GM12878 (cell line): ENCODE measurements at regions of chr3 and their contacts with region 1.

Region 1: DNA sequence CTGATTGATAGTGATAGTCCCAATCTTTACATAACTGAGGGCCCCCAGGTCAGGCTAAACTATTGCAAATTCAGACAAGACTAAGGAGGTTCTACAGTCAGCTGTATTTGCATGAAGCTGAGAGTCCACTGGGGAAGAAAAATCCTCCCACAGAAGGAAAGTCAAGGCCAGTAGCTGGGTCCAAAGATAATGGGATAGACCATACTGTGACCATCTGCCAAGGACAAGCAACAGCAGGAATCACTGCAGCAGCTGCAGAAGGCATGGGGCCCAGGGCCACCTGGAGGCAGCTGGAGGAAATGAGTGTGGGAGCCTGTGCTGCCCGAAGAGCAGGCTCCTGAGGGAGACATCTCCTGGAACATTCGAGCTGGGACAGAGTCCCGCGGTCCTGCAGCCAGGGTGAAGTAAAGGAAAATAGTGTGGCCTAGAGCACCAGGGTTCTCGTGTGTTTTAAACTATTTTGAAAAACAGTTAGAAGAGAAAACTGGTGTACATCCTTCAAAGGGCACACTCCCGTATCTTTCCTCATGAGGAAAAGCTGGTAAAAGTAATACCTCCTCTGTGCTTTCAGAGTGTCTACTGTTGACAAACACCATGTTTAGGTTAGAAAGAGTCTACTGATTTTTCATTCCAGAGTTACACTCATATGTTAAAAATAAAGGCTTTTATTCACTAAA is 13.2 kb upstream of the TMEM212 start:
- DNase-seq: no peak
- ATAC-seq: peak; percentile 85
- H3K4me3 ChIP-seq: no peak overlapping the region
- H3K27ac ChIP-seq: no peak overlapping the region
- H3K4me1 ChIP-seq: no peaks in the 10 kb centered on the region
- H3K27me3 ChIP-seq: no peaks in the 10 kb centered on the region; a peak in 1 of 4 replicates
- CTCF ChIP-seq: peak; percentile 52 to 80 (median 74)
- EP300 ChIP-seq: no peak
- POLR2A ChIP-seq: no peak
- RAD21 ChIP-seq: peak; percentile 53

Region 2: GRCh38 chr3:170961616-170962400 is 868.2 kb before region 1 on chr3:
- CTCF ChIA-PET with region 1: interaction called, 10 read pairs
- POLR2A ChIA-PET with region 1: no interaction called
- RAD21 ChIA-PET with region 1: interaction called, 8 read pairs
- SMC1A ChIA-PET with region 1: interaction called, 7 read pairs
- in situ Hi-C with region 1: no loop called
- intact Hi-C with region 1: no loop called
- DNase-seq: no peak
- ATAC-seq: 0 out of 3 replicates have a peak, but pooled peaks have one; percentile 30
- H3K4me3 ChIP-seq: no peak overlapping the region
- H3K27ac ChIP-seq: no peak overlapping the region
- H3K4me1 ChIP-seq: no peaks in the 10 kb centered on the region
- H3K27me3 ChIP-seq: no peaks in the 10 kb centered on the region; a peak in 1 of 4 replicates
- CTCF ChIP-seq: peak; percentile 31 to 64 (median 43); a peak in 5 of 6 replicates
- EP300 ChIP-seq: no peak
- POLR2A ChIP-seq: no peak
- RAD21 ChIP-seq: peak; percentile 73

Region 3: DNA sequence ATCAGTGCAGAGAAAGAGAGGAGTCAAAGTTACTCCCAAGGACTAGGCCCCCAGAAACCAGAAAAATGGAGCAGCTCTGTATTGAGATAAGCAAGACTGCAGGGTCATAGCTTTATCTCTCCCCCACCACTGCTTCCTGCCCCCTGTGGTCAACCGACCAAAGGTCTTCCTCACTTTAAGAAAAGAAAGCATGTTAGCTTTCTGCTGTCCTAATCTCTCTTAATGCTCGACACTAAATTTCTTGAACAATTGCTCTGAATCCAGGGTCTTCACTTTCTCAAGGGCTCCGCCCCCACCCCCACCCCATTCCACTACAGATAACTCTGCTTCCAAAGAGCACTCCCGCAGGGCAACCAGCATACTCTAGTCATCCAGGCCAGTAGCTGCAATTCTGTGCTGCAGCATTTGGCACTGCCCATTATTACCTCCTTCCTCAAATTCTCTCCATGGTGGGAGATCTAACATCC is 401.6 kb before region 1 on chr3:
- CTCF ChIA-PET with region 1: no interaction called
- POLR2A ChIA-PET with region 1: no interaction called
- RAD21 ChIA-PET with region 1: no interaction called
- SMC1A ChIA-PET with region 1: no interaction called
- in situ Hi-C with region 1: no loop called
- intact Hi-C with region 1: no loop called
- DNase-seq: no peak
- ATAC-seq: peak; percentile 85
- H3K4me3 ChIP-seq: no peak overlapping the region
- H3K27ac ChIP-seq: peak overlapping the region; percentile 32; the same call in 1 of the 2 replicates
- H3K4me1 ChIP-seq: peaks cover 8% of the 10 kb centered on the region; the same call in 1 of the 2 replicates
- H3K27me3 ChIP-seq: no peaks in the 10 kb centered on the region
- CTCF ChIP-seq: 0 out of 6 replicates have a peak, but pooled peaks of 1 of the 3 experiments have one; percentile 11
- EP300 ChIP-seq: no peak
- POLR2A ChIP-seq: no peak
- RAD21 ChIP-seq: no peak

Region 4: DNA sequence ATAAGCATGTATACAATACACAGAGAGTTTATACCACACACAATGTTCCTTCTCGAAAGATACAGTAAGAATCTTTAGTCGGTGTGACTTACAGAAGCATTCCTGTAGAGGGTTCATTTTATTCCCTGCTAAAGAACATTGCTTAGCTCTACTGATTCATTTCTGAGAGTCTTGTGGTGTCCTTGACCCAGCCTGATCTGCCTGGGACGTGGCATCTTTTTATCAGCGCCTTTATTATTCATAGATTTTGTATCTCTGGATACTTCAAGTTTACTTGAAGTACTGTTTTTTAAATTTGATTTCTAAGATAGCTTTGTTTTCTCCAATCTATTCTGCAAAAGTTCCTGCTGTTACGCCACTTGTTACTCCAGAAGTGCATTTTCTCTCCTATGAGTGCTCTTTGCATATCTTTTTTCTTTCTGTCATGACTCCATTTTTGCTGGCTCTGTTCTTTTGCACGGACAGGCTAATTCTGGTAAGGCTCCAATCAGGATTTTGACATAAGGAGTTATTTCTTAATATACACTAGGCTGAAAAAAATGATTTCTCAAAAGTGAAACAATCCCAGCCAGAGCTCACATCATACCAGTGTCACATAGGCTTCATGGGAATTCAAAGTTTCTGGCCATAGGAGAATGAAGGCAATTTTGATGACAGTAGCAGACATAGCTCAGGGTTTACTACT is 255.3 kb before region 1 on chr3:
- CTCF ChIA-PET with region 1: interaction called, 13 read pairs
- POLR2A ChIA-PET with region 1: no interaction called
- RAD21 ChIA-PET with region 1: interaction called, 10 read pairs
- SMC1A ChIA-PET with region 1: interaction called, 15 read pairs
- in situ Hi-C with region 1: no loop called
- intact Hi-C with region 1: loop called (anchors 5 kb)
- DNase-seq: no peak
- ATAC-seq: peak; percentile 17; the same call in 1 of the 3 replicates
- H3K4me3 ChIP-seq: no peak overlapping the region
- H3K27ac ChIP-seq: no peak overlapping the region
- H3K4me1 ChIP-seq: no peaks in the 10 kb centered on the region
- H3K27me3 ChIP-seq: no peaks in the 10 kb centered on the region
- CTCF ChIP-seq: no peak
- EP300 ChIP-seq: no peak
- POLR2A ChIP-seq: no peak
- RAD21 ChIP-seq: no peak

Region 5: GRCh38 chr3:171654809-171655208 is 175.2 kb before region 1 on chr3:
- CTCF ChIA-PET with region 1: interaction called, 19 read pairs
- POLR2A ChIA-PET with region 1: no interaction called
- RAD21 ChIA-PET with region 1: interaction called, 6 read pairs
- SMC1A ChIA-PET with region 1: interaction called, 9 read pairs
- in situ Hi-C with region 1: no loop called
- intact Hi-C with region 1: no loop called
- DNase-seq: no peak
- ATAC-seq: peak; percentile 31
- H3K4me3 ChIP-seq: no peak overlapping the region
- H3K27ac ChIP-seq: peak overlapping the region; percentile 32; the same call in 1 of the 2 replicates
- H3K4me1 ChIP-seq: peaks cover 7% of the 10 kb centered on the region
- H3K27me3 ChIP-seq: no peaks in the 10 kb centered on the region
- CTCF ChIP-seq: no peak
- EP300 ChIP-seq: no peak
- POLR2A ChIP-seq: no peak
- RAD21 ChIP-seq: no peak

Region 6: DNA sequence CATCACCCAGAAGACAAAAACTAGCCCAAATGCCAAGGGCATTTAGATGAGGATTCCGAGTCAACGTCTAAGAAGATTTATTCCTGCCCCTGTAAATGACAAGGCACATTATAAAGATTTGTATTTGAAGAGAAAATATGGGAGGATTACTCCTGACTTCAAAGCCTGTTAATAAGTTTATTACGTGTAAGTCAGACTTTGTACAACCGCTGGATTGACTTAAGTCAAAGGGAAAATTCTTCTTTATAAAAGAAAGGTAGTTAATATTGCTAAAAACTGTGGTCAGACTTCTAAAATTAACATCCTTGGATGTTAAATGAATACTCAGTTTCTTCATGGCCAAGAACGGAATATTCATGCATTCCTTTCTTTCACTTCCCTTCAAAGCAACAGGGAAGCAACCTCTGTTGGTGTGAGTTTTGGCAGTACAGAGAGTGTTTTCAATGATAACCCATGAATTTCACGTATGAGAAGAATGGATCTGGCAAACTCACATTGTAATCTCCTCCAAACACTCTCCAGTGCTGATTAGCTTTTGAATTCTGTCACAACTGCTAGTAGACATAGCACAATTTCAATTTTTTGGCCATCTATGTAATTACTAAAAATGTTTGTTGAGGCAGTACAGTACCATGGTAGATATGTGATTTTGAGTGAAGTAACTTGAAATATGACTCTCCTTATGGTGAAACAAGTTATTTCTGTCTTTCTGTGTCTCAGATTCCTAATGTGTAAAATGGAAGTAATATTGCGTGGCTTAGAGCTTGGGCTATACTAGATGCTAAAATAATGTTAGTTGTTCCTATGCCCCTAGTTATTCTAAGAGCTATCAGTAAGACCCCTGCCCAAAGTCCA is 81.7 kb before region 1 on chr3:
- CTCF ChIA-PET with region 1: interaction called, 6 read pairs
- POLR2A ChIA-PET with region 1: no interaction called
- RAD21 ChIA-PET with region 1: interaction called, 5 read pairs
- SMC1A ChIA-PET with region 1: interaction called, 10 read pairs
- in situ Hi-C with region 1: no loop called
- intact Hi-C with region 1: no loop called
- DNase-seq: no peak
- ATAC-seq: no peak
- H3K4me3 ChIP-seq: no peak overlapping the region
- H3K27ac ChIP-seq: no peak overlapping the region
- H3K4me1 ChIP-seq: no peaks in the 10 kb centered on the region
- H3K27me3 ChIP-seq: no peaks in the 10 kb centered on the region; a peak in 1 of 4 replicates
- CTCF ChIP-seq: no peak
- EP300 ChIP-seq: no peak
- POLR2A ChIP-seq: no peak
- RAD21 ChIP-seq: no peak

Region 7: DNA sequence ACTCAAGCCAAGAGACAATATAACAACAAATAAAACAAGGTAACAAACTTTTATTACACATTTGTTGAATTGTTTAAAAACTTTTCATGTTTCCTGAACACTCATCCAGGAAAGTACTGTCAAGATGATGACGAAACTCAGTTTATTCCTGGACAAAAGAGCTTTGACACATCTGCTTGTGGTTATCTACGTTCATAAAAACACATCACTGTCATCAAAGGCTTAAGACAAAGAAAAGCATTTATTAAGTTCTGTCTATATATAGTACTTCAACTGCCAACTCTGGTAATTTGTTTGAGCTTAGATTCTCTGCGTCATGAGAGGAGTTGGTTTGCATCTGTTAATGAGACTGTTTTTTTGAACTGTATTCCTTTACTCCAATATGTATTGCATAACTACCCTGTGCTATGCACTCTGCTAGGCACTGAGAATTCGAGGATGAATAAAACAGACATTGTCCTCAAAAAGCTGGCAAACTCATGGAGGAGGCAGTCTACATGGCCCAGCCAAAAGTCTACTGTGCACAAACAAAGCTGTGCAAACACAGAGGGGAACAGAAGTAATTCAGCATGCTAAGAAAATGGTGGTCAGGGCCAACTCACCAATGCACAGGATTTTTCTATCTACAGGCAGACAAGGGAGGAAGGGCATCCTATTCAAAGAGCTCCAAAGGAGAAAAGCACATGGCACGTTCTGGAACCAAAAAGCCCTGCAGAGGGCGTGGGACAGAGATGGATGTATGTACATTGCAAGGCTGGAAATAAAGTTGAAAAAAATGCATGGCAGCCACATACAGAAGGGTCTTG is 41.2 kb before region 1 on chr3:
- CTCF ChIA-PET with region 1: interaction called, 66 read pairs
- POLR2A ChIA-PET with region 1: interaction called, 23 read pairs
- RAD21 ChIA-PET with region 1: interaction called, 333 read pairs
- SMC1A ChIA-PET with region 1: interaction called, 63 read pairs
- in situ Hi-C with region 1: no loop called
- intact Hi-C with region 1: no loop called
- DNase-seq: no peak
- ATAC-seq: peak; percentile 10
- H3K4me3 ChIP-seq: no peak overlapping the region
- H3K27ac ChIP-seq: no peak overlapping the region
- H3K4me1 ChIP-seq: no peaks in the 10 kb centered on the region; the same call in 1 of the 2 replicates
- H3K27me3 ChIP-seq: no peaks in the 10 kb centered on the region
- CTCF ChIP-seq: peak in 1 of 3 experiments; percentile 18; a peak in 1 of 6 replicates
- EP300 ChIP-seq: peak; percentile 69 to 92; a peak in 3 of 4 replicates
- POLR2A ChIP-seq: no peak
- RAD21 ChIP-seq: no peak

Region 8: GRCh38 chr3:171816014-171816461 is 13.9 kb before region 1 on chr3:
- CTCF ChIA-PET with region 1: interaction called, 110 read pairs
- POLR2A ChIA-PET with region 1: interaction called, 24 read pairs
- RAD21 ChIA-PET with region 1: interaction called, 117 read pairs
- SMC1A ChIA-PET with region 1: interaction called, 106 read pairs
- in situ Hi-C with region 1: no loop called
- intact Hi-C with region 1: loop called (anchors 2 kb)
- DNase-seq: no peak
- ATAC-seq: no peak
- H3K4me3 ChIP-seq: no peak overlapping the region
- H3K27ac ChIP-seq: no peak overlapping the region
- H3K4me1 ChIP-seq: no peaks in the 10 kb centered on the region
- H3K27me3 ChIP-seq: no peaks in the 10 kb centered on the region; a peak in 1 of 4 replicates
- CTCF ChIP-seq: no peak
- EP300 ChIP-seq: no peak
- POLR2A ChIP-seq: no peak
- RAD21 ChIP-seq: no peak